ENCODE measurements at regions of chr3 and their contacts with region 1.

Region 1: GRCh38 chr3:124780761-124781475 is 50.7 kb downstream of the UMPS start:
- DNase-seq: no peak
- H3K4me3 ChIP-seq: no peak overlapping the region
- H3K27me3 ChIP-seq: no peaks in the 10 kb centered on the region
- CTCF ChIP-seq: no peak

Region 2: DNA sequence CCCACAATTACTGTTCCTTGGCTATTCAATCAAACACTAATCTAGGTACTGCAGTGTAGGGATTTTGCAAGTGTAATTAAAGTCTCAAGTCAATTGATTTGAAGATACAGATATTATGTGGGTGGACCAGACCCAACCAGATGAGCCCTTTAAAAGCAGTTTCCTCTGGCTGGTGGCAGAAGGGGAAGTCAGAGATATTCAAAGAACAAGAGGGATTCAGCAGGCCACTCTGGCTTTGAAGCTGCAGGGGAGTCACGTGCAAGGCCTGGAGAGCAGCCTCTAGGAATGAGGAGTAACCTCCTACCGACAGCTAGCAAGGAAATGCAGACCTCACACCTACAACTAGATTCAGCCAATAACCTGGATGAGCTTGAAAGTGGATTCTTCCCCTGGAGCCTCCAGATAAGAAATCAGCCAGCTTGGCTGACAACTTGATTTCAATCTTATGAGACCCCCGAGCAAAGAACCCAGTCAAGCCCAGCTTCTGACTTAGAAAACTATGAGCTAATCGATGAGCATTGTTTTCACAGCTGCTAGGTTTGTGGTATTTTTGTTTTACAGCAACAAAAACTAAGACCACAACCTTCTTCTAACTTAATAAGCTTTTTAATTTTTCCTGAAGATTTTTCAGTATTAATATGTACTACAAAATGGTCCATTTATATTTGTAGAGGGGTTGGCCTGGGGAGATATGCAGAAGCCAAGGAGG is 1209.5 kb before region 1 on chr3:
- CTCF ChIA-PET with region 1: no interaction called
- POLR2A ChIA-PET with region 1: no interaction called
- DNase-seq: no peak
- H3K4me3 ChIP-seq: no peak overlapping the region
- H3K27me3 ChIP-seq: no peaks in the 10 kb centered on the region
- CTCF ChIP-seq: no peak

Region 3: DNA sequence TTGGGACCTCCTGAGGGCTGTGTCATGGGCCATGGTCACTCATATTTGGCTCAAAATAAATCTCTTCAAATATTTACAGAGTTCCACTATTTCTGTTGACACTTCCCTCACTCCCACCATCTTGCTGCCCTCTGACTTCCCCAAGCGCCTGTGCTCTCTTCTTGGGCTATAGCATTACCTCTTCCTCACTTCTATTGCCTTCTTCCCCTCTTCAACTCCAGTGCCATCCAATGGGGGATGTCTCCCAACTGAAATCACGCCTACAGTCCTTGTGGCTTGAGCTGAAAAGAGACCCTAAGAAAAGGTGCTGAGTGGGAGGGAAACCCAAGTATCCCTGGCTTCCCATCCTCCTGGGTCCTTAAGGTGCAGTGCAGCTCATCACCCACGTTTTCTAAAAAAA is 28.9 kb before region 1 on chr3:
- CTCF ChIA-PET with region 1: no interaction called
- POLR2A ChIA-PET with region 1: no interaction called
- DNase-seq: no peak
- H3K4me3 ChIP-seq: no peak overlapping the region
- H3K27me3 ChIP-seq: no peaks in the 10 kb centered on the region
- CTCF ChIP-seq: no peak

Region 4: GRCh38 chr3:124791639-124792151 is 10.8 kb after region 1 on chr3:
- CTCF ChIA-PET with region 1: interaction called, 12 read pairs
- POLR2A ChIA-PET with region 1: no interaction called
- DNase-seq: peak; percentile 93
- H3K4me3 ChIP-seq: no peak overlapping the region
- H3K27me3 ChIP-seq: no peaks in the 10 kb centered on the region
- CTCF ChIP-seq: no peak

Measured in BJ (cell line).